GM13977 (cell line): ENCODE measurements at regions of chr13 and their contacts with region 1.

Region 1: DNA sequence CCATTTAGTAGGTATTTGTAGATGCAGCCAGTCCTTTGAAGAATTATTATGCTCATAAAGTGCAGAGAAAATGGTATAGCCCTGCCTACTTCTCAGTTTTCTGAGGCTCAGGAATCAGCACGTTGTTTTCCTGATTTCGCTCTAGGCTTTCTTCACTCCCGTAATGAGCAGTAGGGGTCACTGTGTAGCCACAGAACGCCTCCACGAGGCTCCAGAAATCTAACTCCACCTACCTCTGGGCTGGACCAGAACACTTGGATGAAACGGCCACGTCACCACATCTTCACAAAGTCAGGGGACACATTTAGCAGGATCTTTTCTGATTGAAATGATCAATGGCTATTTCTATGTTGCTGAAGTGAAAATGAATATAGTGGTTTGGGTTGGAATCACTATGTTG is 49.8 kb upstream of the GTF3A start:
- DNase-seq: peak; percentile 77
- CTCF ChIP-seq: peak; percentile 77

Region 2: DNA sequence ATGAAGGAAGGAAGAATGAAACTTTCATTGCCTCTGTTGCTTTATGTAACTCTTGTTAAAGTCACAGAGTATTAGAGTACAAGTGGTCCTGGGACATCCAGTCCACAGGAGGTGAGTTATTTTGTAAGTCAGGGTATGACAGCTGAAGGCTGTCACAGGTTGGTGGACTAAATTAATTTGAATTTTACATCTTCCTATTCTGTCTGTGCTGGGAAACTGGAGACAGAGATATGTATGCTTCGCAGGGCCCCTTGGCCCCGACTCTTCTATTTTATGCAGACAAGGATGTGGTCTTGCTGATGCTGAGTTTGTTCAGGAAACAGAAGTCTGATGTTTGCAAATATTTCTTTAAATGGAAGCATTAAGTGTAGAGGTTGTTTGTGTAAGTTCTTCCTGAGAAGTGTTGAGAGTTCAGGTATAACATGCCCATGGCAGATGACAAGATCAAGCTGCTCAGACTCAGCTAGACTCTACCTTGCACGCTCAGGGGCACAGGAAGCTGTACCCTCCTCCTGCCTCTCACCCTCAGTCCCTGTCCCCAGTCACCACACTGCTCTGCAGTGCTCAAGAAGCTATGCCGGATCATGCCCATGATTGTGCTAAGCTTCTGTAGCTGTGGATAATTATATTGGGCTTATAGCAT is 80.7 kb before region 1 on chr13:
- in situ Hi-C with region 1: no loop called
- DNase-seq: no peak
- CTCF ChIP-seq: no peak

Region 3: DNA sequence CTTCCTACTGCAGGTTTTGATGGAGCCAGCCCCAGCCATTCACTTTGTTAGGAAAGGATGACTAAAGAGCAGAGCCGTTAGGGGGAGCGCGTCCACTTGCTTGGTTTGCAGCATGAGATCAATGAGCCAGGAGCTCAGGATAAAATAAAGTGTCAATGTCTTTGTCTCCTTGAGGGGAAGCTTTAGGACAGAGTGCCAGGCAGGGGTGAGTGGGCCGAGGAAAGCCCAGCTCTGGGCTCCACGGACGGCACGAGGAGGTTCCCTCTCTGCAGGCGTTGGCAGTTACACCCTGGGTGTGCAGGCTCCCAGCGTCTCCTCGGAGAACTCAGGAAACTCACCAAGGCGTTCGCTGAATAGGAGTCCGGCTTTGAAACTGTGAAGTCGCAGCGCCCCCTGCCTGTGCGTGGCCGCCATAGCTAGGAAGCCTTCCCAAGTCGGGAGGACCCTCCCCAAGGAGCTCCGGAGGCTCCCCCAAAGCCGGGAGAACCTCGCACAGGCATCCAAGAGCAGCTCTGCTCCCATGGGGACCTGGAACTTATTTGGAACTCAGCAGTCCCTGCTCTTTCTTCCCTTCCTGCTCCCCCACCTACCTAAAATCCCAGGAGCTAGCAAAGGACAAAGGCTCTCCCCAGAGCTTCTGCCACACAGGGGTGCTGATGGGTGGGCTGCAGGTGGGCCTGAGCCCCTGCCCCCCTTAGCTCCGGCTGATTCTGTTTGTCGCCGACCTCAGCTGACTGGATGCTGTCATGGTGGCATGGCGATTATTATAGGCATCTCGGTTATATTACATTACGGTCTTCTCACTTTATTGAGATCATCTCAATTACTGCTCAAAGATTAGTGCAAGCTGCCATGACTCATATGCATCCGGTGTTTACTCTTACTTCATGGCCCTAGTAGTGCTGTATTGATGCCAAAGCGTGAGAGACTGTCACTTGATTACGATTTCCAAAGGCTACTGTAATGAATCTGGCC is 452.0 kb after region 1 on chr13:
- in situ Hi-C with region 1: loop called (anchors 25 kb)
- DNase-seq: peak; percentile 84
- CTCF ChIP-seq: peak; percentile 95